OCI-LY7 (cell line): ENCODE measurements at regions of chr3 and their contacts with region 1.

Region 1: GRCh38 chr3:47513125-47513929 is at the start of gene ELP6:
- DNase-seq: peak; percentile 99
- H3K4me3 ChIP-seq: peak within 1 kb of the TSS; percentile 82
- H3K27ac ChIP-seq: peak within 1 kb of the TSS; percentile 83
- H3K4me1 ChIP-seq: peaks cover 10% of the 10 kb centered on the region
- CTCF ChIP-seq: peak; percentile 76
- total RNA-seq, gene ELP6: 79.3 and 91.5 TPM in 2 replicates

Region 2: DNA sequence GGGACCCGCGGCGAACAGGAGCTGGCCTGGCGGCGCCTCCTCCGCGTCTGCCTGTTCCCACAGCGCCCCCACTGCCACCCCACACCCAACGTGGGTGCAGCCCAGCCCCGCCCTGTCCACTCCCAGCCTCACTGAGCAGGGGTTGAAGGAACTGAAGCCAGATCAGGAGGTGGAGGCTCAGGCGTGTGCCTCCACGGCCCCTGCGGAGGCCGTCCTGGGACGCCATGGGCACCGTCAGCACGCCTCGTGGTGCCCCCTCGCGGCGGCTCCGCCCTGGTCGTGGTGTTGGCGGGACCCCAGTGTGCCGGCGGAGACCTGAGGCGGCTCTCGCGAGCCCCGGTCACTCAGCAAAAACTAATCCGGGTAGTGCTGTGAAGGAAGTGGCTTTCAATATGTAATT is 756.7 kb before region 1 on chr3:
- CTCF ChIA-PET with region 1: no interaction called
- POLR2A ChIA-PET with region 1: no interaction called
- intact Hi-C with region 1: no loop called
- DNase-seq: no peak
- H3K4me3 ChIP-seq: no peak overlapping the region
- H3K27ac ChIP-seq: no peak overlapping the region
- H3K4me1 ChIP-seq: no peaks in the 10 kb centered on the region
- CTCF ChIP-seq: no peak

Region 3: GRCh38 chr3:47420511-47421484 is 92.5 kb before region 1 on chr3:
- CTCF ChIA-PET with region 1: no interaction called
- POLR2A ChIA-PET with region 1: interaction called, 3 read pairs
- intact Hi-C with region 1: loop called (anchors 1 kb)
- DNase-seq: peak; percentile 93
- H3K4me3 ChIP-seq: no peak overlapping the region
- H3K27ac ChIP-seq: peak overlapping the region; percentile 69
- H3K4me1 ChIP-seq: peaks cover 10% of the 10 kb centered on the region
- CTCF ChIP-seq: peak; percentile 91

Region 4: GRCh38 chr3:47475570-47476329 is 37.6 kb before region 1 on chr3 and contains the start of gene SCAP:
- CTCF ChIA-PET with region 1: no interaction called
- POLR2A ChIA-PET with region 1: no interaction called
- intact Hi-C with region 1: loop called (anchors 1 kb)
- DNase-seq: peak; percentile 94
- H3K4me3 ChIP-seq: peak within 1 kb of the TSS; percentile 96
- H3K27ac ChIP-seq: peak within 1 kb of the TSS; percentile 25
- H3K4me1 ChIP-seq: peaks cover 13% of the 10 kb centered on the region
- CTCF ChIP-seq: peak; percentile 83
- total RNA-seq, gene SCAP: 49.6 and 63.7 TPM in 2 replicates

Region 5: GRCh38 chr3:47482366-47482765 is 31.0 kb before region 1 on chr3:
- CTCF ChIA-PET with region 1: no interaction called
- POLR2A ChIA-PET with region 1: interaction called, 11 read pairs
- intact Hi-C with region 1: no loop called
- DNase-seq: no peak
- H3K4me3 ChIP-seq: no peak overlapping the region
- H3K27ac ChIP-seq: peak overlapping the region; percentile 7
- H3K4me1 ChIP-seq: peaks cover 7% of the 10 kb centered on the region
- CTCF ChIP-seq: no peak

Region 6: GRCh38 chr3:47491186-47491585 is 22.1 kb before region 1 on chr3:
- CTCF ChIA-PET with region 1: no interaction called
- POLR2A ChIA-PET with region 1: no interaction called
- intact Hi-C with region 1: loop called (anchors 1 kb)
- DNase-seq: peak; percentile 65
- H3K4me3 ChIP-seq: peak overlapping the region; percentile 10
- H3K27ac ChIP-seq: peak overlapping the region; percentile 73
- H3K4me1 ChIP-seq: peaks cover 26% of the 10 kb centered on the region
- CTCF ChIP-seq: no peak

Region 7: GRCh38 chr3:47578119-47578632 is 64.8 kb after region 1 on chr3:
- CTCF ChIA-PET with region 1: no interaction called
- POLR2A ChIA-PET with region 1: no interaction called
- intact Hi-C with region 1: no loop called
- DNase-seq: peak; percentile 36
- H3K4me3 ChIP-seq: peak overlapping the region; percentile 68
- H3K27ac ChIP-seq: no peak overlapping the region
- H3K4me1 ChIP-seq: peaks cover 6% of the 10 kb centered on the region
- CTCF ChIP-seq: no peak

Region 8: GRCh38 chr3:47791193-47791855 is 278.0 kb after region 1 on chr3:
- CTCF ChIA-PET with region 1: no interaction called
- POLR2A ChIA-PET with region 1: no interaction called
- intact Hi-C with region 1: loop called (anchors 2 kb)
- DNase-seq: no peak
- H3K4me3 ChIP-seq: no peak overlapping the region
- H3K27ac ChIP-seq: no peak overlapping the region
- H3K4me1 ChIP-seq: peaks cover 11% of the 10 kb centered on the region
- CTCF ChIP-seq: no peak

Region 9: DNA sequence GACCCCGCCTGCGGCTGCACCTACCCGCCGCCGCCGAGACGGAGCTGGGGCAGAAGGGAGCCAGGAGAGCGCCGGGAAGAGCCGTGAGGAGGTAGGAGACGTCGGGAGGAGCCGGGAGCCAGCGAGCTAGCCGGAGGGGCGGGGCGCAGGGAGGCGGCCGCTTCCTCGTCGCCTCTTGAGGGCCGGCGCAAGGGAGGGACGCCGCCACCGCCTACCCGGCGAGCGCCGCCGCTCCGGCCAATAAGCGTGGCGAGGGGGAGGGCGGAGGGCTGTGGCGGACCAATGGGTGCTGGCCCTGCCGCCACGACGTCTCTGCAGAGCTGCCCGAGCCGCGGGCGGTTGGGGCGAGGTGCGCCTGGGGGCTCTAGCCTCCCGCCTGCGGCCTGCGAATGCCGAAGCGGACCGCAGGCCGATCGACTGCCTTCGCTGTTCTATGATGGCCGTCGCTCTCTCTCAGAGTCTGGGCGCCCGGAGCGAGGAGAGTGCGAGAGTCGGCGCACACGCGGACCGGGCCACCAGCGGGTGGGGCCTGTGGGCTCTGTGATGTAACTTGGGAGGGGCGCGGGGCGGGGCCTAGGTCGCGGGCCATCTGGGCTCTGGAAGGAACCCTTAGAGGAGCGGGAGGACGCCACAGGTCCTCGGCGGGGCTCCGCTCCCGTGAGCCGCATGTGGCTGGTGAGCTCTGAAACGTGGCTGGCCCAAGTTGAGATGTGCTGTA is 575.6 kb after region 1 on chr3:
- CTCF ChIA-PET with region 1: no interaction called
- POLR2A ChIA-PET with region 1: no interaction called
- intact Hi-C with region 1: loop called (anchors 1 kb)
- DNase-seq: peak; percentile 96
- H3K4me3 ChIP-seq: peak overlapping the region; percentile 83
- H3K27ac ChIP-seq: peak overlapping the region; percentile 81
- H3K4me1 ChIP-seq: peaks cover 19% of the 10 kb centered on the region
- CTCF ChIP-seq: no peak